AG04450 (cell line): ENCODE measurements at regions of chr12 and their contacts with region 1.

Region 1: DNA sequence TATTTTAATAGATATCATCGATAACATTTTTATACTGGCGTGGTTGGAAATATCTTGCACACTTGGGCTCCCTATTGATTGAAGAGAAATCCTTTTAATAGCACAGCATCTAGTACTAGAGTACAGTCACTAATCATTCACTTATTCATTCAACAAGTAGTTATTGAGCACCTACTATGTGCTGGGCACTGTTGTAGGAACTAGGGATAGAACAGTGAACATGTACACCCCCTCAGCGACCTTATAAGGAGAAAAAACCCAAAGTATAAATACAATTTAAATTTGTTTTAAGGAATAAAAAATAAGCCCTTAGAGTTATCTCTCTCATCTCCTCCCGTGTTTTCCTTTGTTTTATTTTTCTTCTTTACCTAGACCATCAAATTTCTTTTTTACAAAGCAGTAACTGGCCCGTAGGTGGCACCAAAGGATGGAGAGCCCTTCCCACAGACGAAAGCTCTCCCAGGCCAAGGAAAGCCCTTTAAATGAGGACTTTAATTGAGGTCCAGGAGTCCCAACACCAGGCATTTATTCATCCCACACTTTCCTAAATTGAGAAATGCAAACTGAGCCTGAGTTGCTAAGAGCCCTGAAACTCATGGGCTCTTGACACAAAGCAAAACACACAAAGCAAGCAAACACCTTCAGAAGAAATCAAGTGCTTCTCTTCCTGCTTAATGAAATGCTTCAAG is 29.0 kb downstream of the PEBP1 start:
- DNase-seq: no peak
- H3K4me3 ChIP-seq: no peak overlapping the region
- H3K27ac ChIP-seq: no peak overlapping the region
- H3K27me3 ChIP-seq: no peaks in the 10 kb centered on the region
- CTCF ChIP-seq: peak; percentile 66

Region 2: GRCh38 chr12:118175823-118176447 is 11.0 kb after region 1 on chr12:
- CTCF ChIA-PET with region 1: interaction called, 37 read pairs
- POLR2A ChIA-PET with region 1: no interaction called
- DNase-seq: no peak
- H3K4me3 ChIP-seq: no peak overlapping the region
- H3K27ac ChIP-seq: no peak overlapping the region
- H3K27me3 ChIP-seq: no peaks in the 10 kb centered on the region
- CTCF ChIP-seq: no peak

Region 3: GRCh38 chr12:118183705-118184104 is 18.8 kb after region 1 on chr12:
- CTCF ChIA-PET with region 1: interaction called, 37 read pairs
- POLR2A ChIA-PET with region 1: no interaction called
- DNase-seq: no peak
- H3K4me3 ChIP-seq: no peak overlapping the region
- H3K27ac ChIP-seq: no peak overlapping the region
- H3K27me3 ChIP-seq: no peaks in the 10 kb centered on the region
- CTCF ChIP-seq: no peak